ENCODE measurements at regions of chr15 and their contacts with region 1.

Region 1: GRCh38 chr15:79101866-79102578 is 11.4 kb upstream of the RASGRF1 start:
- DNase-seq: no peak
- ATAC-seq: peak in 1 of 2 experiments; percentile 56; a peak in 3 of 6 replicates
- H3K4me3 ChIP-seq: no peak overlapping the region
- H3K27ac ChIP-seq: no peak overlapping the region
- H3K4me1 ChIP-seq: no peaks in the 10 kb centered on the region
- CTCF ChIP-seq: no peak
- EP300 ChIP-seq: no peak
- POLR2A ChIP-seq: no peak
- RAD21 ChIP-seq: 0 out of 5 replicates have a peak, but pooled peaks of 1 of the 2 experiments have one; percentile 18

Region 2: DNA sequence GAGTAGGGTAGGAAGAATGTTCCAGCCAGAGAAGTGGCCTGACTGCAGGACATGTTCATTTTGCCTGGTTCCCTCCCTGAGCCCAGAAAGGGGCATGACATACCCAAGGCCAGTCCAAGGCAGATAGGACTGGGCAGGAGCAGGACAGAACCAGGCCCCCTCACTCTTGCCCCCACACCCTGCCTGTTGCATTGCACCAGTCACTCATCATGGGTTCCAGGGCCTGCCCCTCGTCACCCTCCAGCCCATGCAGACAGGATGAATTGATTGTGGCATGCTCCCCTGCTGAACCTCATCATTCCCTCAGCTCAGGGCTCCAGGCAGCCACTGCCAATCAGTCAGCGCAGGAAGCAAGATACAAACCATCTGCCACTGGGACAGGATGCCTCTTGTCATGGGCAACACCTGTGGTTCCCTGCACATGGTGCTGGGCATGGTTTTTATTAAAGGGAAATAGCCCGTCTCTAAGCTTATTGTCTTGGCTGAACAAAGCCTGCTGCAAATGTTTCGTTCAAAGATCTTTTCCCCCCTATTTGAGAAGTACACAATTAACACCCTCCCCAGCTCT is 60.3 kb before region 1 on chr15:
- CTCF ChIA-PET with region 1: no interaction called
- POLR2A ChIA-PET with region 1: no interaction called
- DNase-seq: no peak
- ATAC-seq: no peak
- H3K4me3 ChIP-seq: no peak overlapping the region
- H3K27ac ChIP-seq: no peak overlapping the region
- H3K4me1 ChIP-seq: no peaks in the 10 kb centered on the region
- CTCF ChIP-seq: no peak
- EP300 ChIP-seq: no peak
- POLR2A ChIP-seq: no peak
- RAD21 ChIP-seq: no peak

Region 3: GRCh38 chr15:79086814-79087213 is 15.2 kb before region 1 on chr15:
- CTCF ChIA-PET with region 1: no interaction called
- POLR2A ChIA-PET with region 1: no interaction called
- DNase-seq: no peak
- ATAC-seq: no peak
- H3K4me3 ChIP-seq: no peak overlapping the region
- H3K27ac ChIP-seq: no peak overlapping the region
- H3K4me1 ChIP-seq: peaks cover 17% of the 10 kb centered on the region
- CTCF ChIP-seq: no peak
- EP300 ChIP-seq: no peak
- POLR2A ChIP-seq: no peak
- RAD21 ChIP-seq: no peak

Region 4: DNA sequence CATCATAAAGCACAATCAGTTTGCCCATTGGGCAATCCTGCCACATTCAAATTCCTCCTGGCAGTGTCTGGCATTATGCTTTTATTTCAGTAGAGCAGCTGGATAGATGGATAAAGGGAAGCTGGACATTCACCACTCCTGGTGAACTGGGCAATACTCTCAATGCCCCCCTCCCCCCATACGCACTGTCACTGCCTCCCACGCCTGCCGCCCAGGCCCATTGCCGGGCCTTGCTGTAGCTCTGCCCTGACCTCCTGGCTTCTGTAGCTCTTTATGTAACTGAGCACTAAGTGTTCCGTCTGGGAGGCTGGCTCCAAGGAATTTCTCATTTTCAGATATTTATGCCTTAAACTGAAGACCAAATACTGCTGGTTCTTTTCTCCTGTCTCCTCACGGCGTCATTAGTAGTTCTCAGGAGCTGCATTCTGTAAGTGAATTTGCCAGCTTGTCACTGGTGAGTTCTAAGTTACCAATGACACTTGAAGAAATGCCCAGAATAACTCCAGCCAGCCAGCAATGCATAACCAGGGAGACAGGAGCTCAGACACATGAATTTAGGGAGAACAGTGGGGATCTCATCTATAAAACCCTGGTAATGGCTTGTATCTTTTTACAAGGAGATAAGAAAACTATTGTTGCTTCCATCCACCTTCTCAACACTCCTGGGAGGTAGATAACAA is 14.1 kb after region 1 on chr15:
- CTCF ChIA-PET with region 1: interaction called, 52 read pairs
- POLR2A ChIA-PET with region 1: no interaction called
- DNase-seq: no peak
- ATAC-seq: no peak
- H3K4me3 ChIP-seq: no peak overlapping the region
- H3K27ac ChIP-seq: no peak overlapping the region
- H3K4me1 ChIP-seq: no peaks in the 10 kb centered on the region
- CTCF ChIP-seq: no peak
- EP300 ChIP-seq: no peak
- POLR2A ChIP-seq: no peak
- RAD21 ChIP-seq: no peak